Heart left ventricle (tissue), 16 donors: ENCODE measurements at regions of chr7 and their contacts with region 1.

Region 1: DNA sequence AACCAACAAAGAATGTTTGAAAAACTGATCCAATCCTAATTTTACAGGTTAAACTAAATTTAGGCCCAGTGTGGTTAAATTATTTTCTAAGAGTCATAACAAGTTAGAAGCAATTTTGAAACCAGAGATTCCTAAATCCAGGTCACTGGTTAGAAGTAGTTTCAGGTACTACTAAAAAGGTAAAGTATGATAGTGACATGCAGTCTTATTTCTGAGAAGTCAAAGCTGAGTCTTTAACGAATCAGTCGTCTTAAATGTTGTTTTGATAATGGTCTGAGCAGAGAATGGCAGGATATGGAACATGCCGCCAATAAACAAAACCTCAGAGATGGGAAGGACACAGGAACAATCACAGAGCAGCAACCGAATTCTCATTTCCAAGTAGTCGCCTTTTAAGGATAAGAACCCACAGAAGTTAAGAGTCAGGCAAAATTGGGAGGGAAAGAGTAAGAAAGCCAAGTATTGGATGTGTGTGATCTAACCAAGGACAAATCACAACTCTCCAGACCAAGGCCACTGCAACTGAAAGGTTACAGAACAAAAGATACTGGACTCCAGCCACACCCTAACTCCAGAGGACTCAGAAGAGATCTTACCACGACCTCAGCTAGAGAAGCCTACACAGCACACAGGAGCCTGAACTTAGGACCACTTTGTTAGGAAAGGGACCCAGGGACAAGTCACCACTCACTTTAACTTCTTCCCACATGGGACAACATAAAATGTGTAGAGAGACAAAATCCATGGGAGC is 19.7 kb downstream of the TMEM243 start:
- DNase-seq: no peak
- ATAC-seq: peak in 3 of 4 donors; percentile 34 to 57 (median 54)
- H3K4me3 ChIP-seq: no peak overlapping the region
- H3K27ac ChIP-seq: peak overlapping the region in 7 of 12 donors; percentile 3 to 29 (median 16)
- H3K4me1 ChIP-seq: peaks cover 0 to 42% (median 17%) of the 10 kb centered on the region in 12 donors
- H3K27me3 ChIP-seq: no peaks in the 10 kb centered on the region
- CTCF ChIP-seq: no peak
- POLR2A ChIP-seq: no peak

Region 2: DNA sequence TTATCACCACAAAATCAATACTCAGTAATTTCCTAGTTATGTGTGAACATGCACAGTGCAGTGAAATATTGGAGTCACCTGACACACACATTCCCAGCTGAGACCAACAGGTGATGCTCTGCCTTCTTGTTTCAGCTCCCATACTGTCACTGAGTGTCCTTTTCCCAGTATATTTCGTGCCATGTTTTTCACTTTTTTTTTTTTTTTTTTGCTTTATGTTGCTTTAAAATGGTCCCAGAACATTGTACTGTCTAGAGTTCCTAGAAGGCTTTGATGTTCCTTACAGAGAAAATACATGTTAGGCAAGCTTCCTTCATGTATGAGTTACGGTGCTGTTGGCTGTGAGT is 186.1 kb before region 1 on chr7:
- intact Hi-C with region 1: no loop called
- DNase-seq: no peak
- ATAC-seq: no peak
- H3K4me3 ChIP-seq: no peak overlapping the region
- H3K27ac ChIP-seq: no peak overlapping the region
- H3K4me1 ChIP-seq: no peaks in the 10 kb centered on the region
- H3K27me3 ChIP-seq: no peaks in the 10 kb centered on the region
- CTCF ChIP-seq: no peak
- POLR2A ChIP-seq: no peak

Region 3: GRCh38 chr7:87164433-87164832 is 35.4 kb before region 1 on chr7:
- intact Hi-C with region 1: loop called in 1 of 10 experiments (anchors 5 kb)
- DNase-seq: no peak
- ATAC-seq: no peak
- H3K4me3 ChIP-seq: no peak overlapping the region
- H3K27ac ChIP-seq: no peak overlapping the region
- H3K4me1 ChIP-seq: peaks cover 0 to 9% (median 1%) of the 10 kb centered on the region in 12 donors
- H3K27me3 ChIP-seq: no peaks in the 10 kb centered on the region
- CTCF ChIP-seq: no peak
- POLR2A ChIP-seq: no peak

Region 4: GRCh38 chr7:87252166-87252565 is 52.3 kb after region 1 on chr7:
- intact Hi-C with region 1: no loop called
- DNase-seq: no peak
- ATAC-seq: no peak
- H3K4me3 ChIP-seq: no peak overlapping the region
- H3K27ac ChIP-seq: no peak overlapping the region
- H3K4me1 ChIP-seq: no peaks in the 10 kb centered on the region
- H3K27me3 ChIP-seq: no peaks in the 10 kb centered on the region
- CTCF ChIP-seq: no peak
- POLR2A ChIP-seq: no peak

Region 5: DNA sequence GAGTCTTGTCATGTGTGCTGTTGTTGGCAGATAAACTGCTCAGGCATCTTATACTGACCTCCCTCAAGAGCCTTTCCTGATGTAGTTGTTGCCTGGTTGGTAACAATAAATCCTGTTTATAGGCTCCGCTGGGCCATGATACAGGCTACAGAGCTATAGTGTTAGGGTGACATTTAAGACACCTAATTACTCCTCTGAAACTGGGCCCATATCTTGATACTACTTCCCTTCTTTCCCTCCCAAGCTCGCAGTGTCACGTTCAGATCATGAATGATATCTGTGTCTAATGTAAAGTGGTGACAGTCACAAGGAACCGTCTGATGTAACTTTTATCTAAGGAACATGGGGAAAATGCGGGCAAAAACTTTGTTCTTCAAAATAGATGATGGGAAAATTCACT is 181.0 kb after region 1 on chr7:
- intact Hi-C with region 1: no loop called
- DNase-seq: no peak
- ATAC-seq: no peak
- H3K4me3 ChIP-seq: no peak overlapping the region
- H3K27ac ChIP-seq: no peak overlapping the region
- H3K4me1 ChIP-seq: no peaks in the 10 kb centered on the region
- H3K27me3 ChIP-seq: no peaks in the 10 kb centered on the region
- CTCF ChIP-seq: no peak
- POLR2A ChIP-seq: no peak

Region 6: DNA sequence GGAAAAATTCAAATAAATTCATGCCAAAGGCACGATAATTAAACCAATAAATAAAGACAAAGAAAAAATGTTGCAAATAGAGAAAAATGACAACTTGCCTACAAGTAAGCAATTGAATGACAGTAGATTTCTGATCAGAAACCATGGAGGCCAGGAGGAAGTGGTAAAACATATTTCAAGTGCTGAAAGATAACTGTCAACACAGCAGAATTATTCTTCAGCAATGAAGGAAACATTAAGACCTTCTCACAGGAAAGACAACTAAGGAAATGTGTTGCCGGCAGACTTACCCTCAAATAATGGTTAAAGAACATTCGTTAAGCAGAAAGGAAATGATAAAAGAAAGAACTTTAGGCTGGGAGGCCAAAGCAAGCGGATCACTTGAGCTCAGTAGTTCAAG is 458.7 kb after region 1 on chr7:
- intact Hi-C with region 1: no loop called
- DNase-seq: no peak
- ATAC-seq: no peak
- H3K4me3 ChIP-seq: no peak overlapping the region
- H3K27ac ChIP-seq: no peak overlapping the region
- H3K4me1 ChIP-seq: no peaks in the 10 kb centered on the region
- H3K27me3 ChIP-seq: no peaks in the 10 kb centered on the region
- CTCF ChIP-seq: no peak
- POLR2A ChIP-seq: no peak